WTC11 (cell line): ENCODE measurements at regions of chr9 and their contacts with region 1.

Region 1: DNA sequence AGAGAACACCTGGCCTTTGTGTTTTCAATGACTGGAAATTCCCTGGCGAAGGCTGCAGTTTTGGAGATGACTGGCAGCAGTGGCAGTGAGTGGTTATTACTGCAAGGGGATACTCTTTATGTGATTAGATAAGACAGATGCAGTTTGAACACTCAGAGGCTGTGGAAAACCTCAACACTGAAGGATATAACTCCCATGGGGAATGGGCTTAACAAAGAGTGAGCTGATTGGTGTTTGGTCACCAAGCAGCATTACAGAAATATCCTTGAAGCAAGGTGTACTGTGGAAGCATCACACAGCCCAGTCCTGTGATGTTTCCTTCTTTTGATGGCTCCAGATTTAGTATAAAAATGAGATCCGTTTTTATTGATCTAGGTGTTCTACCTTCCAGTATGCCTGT is 490.7 kb upstream of the PTPRD start:
- DNase-seq: no peak
- ATAC-seq: no peak
- H3K4me3 Mint-ChIP-seq: no peak overlapping the region
- H3K27ac Mint-ChIP-seq: 0 out of 2 replicates have a peak overlapping the region, but pooled peaks have one; percentile 48
- H3K4me1 Mint-ChIP-seq: peaks cover 16% of the 10 kb centered on the region
- H3K27me3 Mint-ChIP-seq: no peaks in the 10 kb centered on the region
- CTCF ChIP-seq: no peak

Region 2: DNA sequence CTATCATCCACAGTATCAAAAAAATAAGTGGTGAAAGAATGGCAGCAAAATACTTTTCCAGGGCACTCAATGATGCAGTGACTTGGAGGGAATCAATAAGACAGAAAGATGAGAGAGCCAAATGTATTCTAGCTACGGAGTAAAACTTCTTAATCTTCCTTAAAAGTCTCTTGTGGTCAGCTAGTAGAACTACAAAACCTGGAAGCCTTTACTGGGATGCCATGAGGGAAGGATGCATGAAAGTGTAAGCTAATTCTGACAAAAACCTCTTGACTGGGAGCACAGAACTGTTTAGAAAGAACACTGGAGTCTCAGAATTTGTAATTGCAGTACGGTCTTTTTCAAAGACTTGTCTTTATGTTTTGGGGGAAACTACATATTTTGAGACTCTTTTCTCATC is 57.9 kb before region 1 on chr9:
- CTCF ChIA-PET with region 1: interaction called, 3 read pairs
- POLR2A ChIA-PET with region 1: interaction called, 10 read pairs
- DNase-seq: no peak
- ATAC-seq: peak; percentile 73
- H3K4me3 Mint-ChIP-seq: no peak overlapping the region
- H3K27ac Mint-ChIP-seq: no peak overlapping the region
- H3K4me1 Mint-ChIP-seq: no peaks in the 10 kb centered on the region
- H3K27me3 Mint-ChIP-seq: no peaks in the 10 kb centered on the region
- CTCF ChIP-seq: no peak